ENCODE measurements at regions of chr19 and their contacts with region 1.

Region 1: GRCh38 chr19:18000935-18001778 is 6.8 kb upstream of the ARRDC2 start:
- DNase-seq: peak; percentile 92
- H3K4me3 ChIP-seq: peak overlapping the region; percentile 72
- H3K27ac ChIP-seq: peak overlapping the region; percentile 91
- H3K4me1 ChIP-seq: peaks cover 13% of the 10 kb centered on the region
- H3K27me3 ChIP-seq: no peaks in the 10 kb centered on the region
- CTCF ChIP-seq: no peak

Region 2: DNA sequence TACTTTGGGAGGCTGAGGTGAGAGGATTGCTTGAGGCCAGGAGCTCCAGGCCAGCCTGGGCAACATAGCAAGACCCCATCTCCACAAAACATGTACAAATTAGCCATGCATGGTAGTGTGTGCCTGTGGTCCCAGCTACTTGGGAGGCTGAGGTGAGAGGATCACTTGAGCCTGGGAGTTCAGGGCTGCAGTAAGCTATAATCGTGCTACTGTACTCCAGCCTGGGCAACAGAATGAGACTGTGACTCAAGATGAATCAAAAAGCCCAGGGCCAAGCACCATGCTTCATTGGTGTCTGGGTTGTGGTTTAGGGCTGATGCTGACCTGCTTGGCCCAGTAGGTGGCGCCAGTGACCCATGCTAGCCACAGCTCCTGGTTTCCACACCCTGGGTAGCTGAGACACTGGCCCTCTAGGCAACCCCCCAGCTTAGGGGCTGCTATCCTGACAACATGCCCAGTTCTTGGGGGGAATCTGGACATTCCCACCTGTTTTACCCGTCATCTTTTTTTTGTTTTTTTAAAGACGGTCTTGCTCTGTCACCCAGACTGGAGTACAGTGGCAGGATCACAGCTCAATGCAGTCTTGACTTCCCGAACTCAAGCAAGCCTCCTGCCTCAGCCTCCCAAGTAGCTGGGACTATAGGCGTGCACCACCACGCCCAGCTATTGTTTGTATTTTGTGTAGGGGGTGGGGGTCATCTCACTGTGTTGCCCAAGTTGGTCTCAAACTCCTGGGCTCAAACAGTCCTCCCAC is 62.9 kb before region 1 on chr19:
- CTCF ChIA-PET with region 1: interaction called, 18 read pairs
- POLR2A ChIA-PET with region 1: no interaction called
- intact Hi-C with region 1: loop called (anchors 1 kb)
- DNase-seq: peak; percentile 84
- H3K4me3 ChIP-seq: no peak overlapping the region
- H3K27ac ChIP-seq: no peak overlapping the region
- H3K4me1 ChIP-seq: peaks cover 18% of the 10 kb centered on the region
- H3K27me3 ChIP-seq: no peaks in the 10 kb centered on the region
- CTCF ChIP-seq: peak; percentile 92